ENCODE measurements at regions of chr1 and their contacts with region 1.

Region 1: GRCh38 chr1:27662707-27663393 is 9.1 kb downstream of the IFI6 start:
- DNase-seq: peak; percentile 39 to 93
- H3K4me3 ChIP-seq: no peak overlapping the region
- H3K27ac ChIP-seq: peak overlapping the region; percentile 35 to 39
- H3K4me1 ChIP-seq: peaks cover 4 to 20% of the 10 kb centered on the region in 2 donors
- H3K27me3 ChIP-seq: no peaks in the 10 kb centered on the region
- CTCF ChIP-seq: peak; percentile 83 to 97 (median 83)

Region 2: DNA sequence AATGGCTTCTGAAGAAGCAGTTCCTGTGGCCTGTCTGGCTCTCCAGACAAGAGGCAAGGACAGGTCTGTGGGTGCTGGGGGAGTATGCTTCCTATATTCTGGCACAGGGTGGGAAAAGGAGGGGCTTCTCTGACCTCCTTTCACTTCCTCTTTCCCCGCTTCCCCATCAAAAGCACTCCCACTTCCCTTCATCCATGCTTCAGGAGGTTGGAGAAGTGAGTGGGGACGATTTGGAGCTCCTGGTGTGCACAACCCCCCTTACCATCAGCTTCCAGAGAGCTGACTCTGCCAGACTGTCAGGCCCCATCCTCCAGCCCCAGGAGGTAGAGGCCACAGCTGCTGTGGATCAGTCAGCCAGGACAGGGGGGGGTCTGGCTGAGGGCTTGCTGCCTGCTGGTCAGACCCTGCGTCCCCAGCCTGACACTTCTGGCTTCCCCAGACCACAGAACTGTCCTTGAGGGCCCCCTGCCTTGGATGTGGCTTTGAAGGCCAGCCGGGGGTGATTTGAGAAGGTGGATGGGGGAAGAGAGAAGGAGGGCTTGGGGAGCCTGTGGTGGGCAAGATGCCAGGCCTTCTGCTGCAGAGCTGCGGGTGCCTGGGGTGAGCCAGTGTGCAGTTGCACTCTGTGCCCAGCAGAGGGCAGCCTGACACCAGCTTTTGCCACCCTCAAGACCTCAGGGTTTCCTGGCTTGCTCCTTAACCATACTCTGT is 362.4 kb before region 1 on chr1:
- intact Hi-C with region 1: loop called (anchors 5 kb)
- DNase-seq: peak; percentile 46 to 88
- H3K4me3 ChIP-seq: no peak overlapping the region
- H3K27ac ChIP-seq: peak overlapping the region; percentile 67 to 71
- H3K4me1 ChIP-seq: peaks cover 0 to 15% of the 10 kb centered on the region in 2 donors
- H3K27me3 ChIP-seq: no peaks in the 10 kb centered on the region
- CTCF ChIP-seq: peak; percentile 98 to 99 (median 99)

Region 3: DNA sequence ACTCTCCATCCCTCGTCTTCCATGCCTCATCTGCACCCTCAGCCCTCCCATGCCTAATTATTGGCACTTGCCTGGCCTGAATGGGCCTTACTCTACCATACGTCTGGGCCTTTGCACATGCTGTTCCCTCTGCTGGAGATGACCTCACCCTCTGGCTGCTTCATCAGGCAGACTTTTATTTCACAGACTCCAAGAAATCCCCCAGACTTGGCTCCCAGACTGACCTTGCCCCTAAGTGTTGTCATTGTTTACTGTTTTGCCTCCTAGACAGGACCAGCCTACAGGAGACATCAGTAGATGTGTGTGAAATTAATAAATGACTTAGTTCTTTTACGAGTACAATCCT is 53.7 kb before region 1 on chr1:
- intact Hi-C with region 1: loop called (anchors 1 kb)
- DNase-seq: no peak
- H3K4me3 ChIP-seq: no peak overlapping the region
- H3K27ac ChIP-seq: no peak overlapping the region
- H3K4me1 ChIP-seq: peaks cover 0 to 4% of the 10 kb centered on the region in 2 donors
- H3K27me3 ChIP-seq: no peaks in the 10 kb centered on the region
- CTCF ChIP-seq: no peak

Region 4: GRCh38 chr1:27646676-27647075 is 16.2 kb before region 1 on chr1:
- intact Hi-C with region 1: loop called (anchors 1 kb)
- DNase-seq: no peak
- H3K4me3 ChIP-seq: no peak overlapping the region
- H3K27ac ChIP-seq: no peak overlapping the region
- H3K4me1 ChIP-seq: peaks cover 0 to 9% of the 10 kb centered on the region in 2 donors
- H3K27me3 ChIP-seq: no peaks in the 10 kb centered on the region
- CTCF ChIP-seq: no peak

Region 5: DNA sequence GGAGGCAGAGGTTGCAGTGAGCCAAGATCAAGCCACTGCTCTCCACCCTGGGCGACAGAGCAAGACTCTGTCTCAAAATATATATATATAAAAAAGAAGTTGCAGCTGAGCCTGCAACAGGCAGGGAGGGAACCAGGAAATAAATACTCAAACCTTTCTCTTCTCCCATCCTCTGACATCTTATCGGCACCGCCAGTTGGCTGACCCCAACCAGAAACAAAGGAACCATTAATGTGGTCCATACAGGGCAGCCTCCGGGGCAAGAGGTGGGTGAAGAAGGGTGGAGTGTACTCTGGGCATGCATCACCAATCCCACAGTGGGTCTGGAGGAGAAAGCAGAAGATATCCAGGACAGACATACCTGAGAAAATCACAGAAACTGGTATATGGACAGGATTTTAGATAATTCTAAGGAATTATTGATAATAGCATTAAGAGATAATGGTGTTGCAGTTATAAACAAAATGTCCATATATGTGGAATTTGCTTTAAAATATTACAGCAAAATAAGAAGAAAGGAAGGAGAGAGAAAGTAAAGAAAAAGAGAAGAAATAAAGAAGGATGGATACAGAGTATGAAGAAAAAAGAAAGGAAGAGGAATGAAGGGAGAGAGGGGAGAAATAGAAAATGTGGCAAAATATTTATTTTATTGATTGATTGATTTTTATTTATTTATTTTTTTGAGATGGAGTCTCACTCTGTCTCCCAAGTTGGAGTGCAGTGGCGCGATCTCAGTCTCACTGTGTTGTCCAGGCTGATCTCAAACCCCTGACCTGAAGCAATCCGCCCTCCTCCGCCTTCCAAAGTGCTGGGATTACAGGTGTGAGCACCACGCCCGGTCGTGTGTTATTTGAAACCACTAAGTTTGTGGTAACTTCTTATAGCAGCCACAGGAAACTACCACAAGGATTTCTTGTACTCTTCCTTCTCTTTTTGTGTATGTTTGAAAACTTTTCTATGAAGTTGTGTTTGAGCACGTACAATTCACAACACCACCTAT is 517.8 kb after region 1 on chr1:
- intact Hi-C with region 1: no loop called
- DNase-seq: no peak
- H3K4me3 ChIP-seq: no peak overlapping the region
- H3K27ac ChIP-seq: no peak overlapping the region
- H3K4me1 ChIP-seq: no peaks in the 10 kb centered on the region
- H3K27me3 ChIP-seq: no peaks in the 10 kb centered on the region
- CTCF ChIP-seq: no peak

Region 6: GRCh38 chr1:28470146-28470545 is 807.3 kb after region 1 on chr1:
- intact Hi-C with region 1: no loop called
- DNase-seq: no peak
- H3K4me3 ChIP-seq: no peak overlapping the region
- H3K27ac ChIP-seq: no peak overlapping the region
- H3K4me1 ChIP-seq: no peaks in the 10 kb centered on the region
- H3K27me3 ChIP-seq: no peaks in the 10 kb centered on the region
- CTCF ChIP-seq: no peak

Measured in ascending aorta (tissue), 2 donors.